ENCODE measurements at regions of chr3 and their contacts with region 1.

Region 1: DNA sequence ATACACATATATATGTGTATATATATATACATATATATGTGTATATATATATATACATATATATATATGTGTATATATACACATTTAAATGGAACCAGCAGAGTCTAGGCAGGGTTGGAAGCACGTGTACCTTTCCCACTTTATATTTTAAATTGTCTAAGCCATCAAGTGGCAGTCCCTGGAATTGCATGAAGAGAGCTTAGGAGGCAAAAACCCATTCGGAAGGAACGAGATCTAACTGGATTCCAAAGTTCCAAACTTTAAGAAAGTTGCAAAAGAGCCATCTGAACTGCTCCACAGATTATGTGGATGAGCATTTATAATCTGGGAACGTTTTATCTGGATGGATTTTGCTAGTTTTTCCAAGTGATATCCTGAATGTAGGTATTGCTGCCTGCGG is 186.5 kb downstream of the FOXP1 start:
- DNase-seq: no peak
- H3K4me3 ChIP-seq: no peak overlapping the region
- H3K4me3 Mint-ChIP-seq: peak overlapping the region in 5 of 8 donors; percentile 20 to 84 (median 76)
- H3K27ac ChIP-seq: peak overlapping the region; percentile 15
- H3K27ac Mint-ChIP-seq: peak overlapping the region in 6 of 7 donors; percentile 73 to 92 (median 80)
- H3K4me1 ChIP-seq: peaks cover 66% of the 10 kb centered on the region
- H3K4me1 Mint-ChIP-seq: peaks cover 56 to 82% (median 69%) of the 10 kb centered on the region in 4 donors
- H3K27me3 ChIP-seq: no peaks in the 10 kb centered on the region
- H3K27me3 Mint-ChIP-seq: no peaks in the 10 kb centered on the region

Region 2: DNA sequence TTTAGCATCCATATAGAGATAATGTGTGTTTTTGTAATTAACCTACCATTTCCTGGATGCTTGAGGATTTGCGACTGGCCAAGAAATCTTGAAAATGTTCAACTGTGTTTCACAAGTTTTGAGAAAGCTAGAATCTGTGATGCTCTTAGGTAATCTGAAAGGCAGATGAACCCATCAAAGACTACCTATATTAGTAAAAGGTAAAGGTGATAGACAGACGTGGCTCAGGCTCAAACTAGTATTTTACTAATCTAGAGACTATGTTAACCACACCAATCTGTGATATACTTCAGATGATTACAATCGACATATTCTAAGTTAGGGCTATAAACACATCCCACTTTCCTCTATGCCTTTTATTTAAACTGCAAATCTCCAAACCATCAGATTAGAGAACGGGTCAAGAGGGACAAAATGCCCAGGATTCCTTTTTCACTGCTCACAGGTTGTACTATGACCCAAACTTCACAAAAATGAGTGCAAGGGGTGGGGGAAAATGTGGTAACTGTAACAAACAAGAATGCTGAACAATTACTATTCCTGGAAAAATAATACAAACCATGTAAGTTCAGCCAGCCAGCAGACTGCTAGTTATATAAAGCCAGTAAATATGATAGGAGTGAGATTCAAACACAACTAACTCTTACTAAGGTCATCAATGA is 108.6 kb before region 1 on chr3:
- CTCF ChIA-PET with region 1: no interaction called
- POLR2A ChIA-PET with region 1: no interaction called
- intact Hi-C with region 1: no loop called
- DNase-seq: no peak
- H3K4me3 ChIP-seq: no peak overlapping the region
- H3K4me3 Mint-ChIP-seq: no peak overlapping the region
- H3K27ac ChIP-seq: no peak overlapping the region
- H3K27ac Mint-ChIP-seq: peak overlapping the region in 4 of 7 donors; percentile 12 to 70 (median 34)
- H3K4me1 ChIP-seq: no peaks in the 10 kb centered on the region
- H3K4me1 Mint-ChIP-seq: peaks cover 16 to 32% (median 19%) of the 10 kb centered on the region in 4 donors
- H3K27me3 ChIP-seq: no peaks in the 10 kb centered on the region
- H3K27me3 Mint-ChIP-seq: no peaks in the 10 kb centered on the region

Region 3: DNA sequence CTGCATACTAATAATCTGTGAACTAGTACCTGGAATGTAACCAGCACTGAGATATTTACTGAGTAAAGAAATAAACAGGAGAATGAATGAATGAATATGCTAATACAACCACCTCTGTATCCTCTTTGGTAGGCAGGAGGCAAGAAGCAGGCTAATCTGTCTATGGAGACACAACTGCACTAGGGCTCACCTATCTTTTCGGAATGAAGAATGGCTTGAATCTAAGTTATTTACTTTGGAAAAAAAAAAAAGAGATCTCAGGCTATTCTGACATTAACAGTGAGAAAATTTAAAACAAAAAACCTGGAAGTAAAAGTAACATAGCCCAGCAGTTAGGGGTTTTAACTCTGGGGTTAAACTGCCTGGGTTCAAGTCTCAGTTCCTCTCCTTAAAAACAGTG is 12.3 kb after region 1 on chr3:
- CTCF ChIA-PET with region 1: interaction called, 14 read pairs
- POLR2A ChIA-PET with region 1: no interaction called
- intact Hi-C with region 1: no loop called
- DNase-seq: no peak
- H3K4me3 ChIP-seq: no peak overlapping the region
- H3K4me3 Mint-ChIP-seq: no peak overlapping the region
- H3K27ac ChIP-seq: no peak overlapping the region
- H3K27ac Mint-ChIP-seq: peak overlapping the region in 5 of 7 donors; percentile 0 to 19 (median 5)
- H3K4me1 ChIP-seq: peaks cover 20% of the 10 kb centered on the region
- H3K4me1 Mint-ChIP-seq: peaks cover 31 to 86% (median 46%) of the 10 kb centered on the region in 4 donors
- H3K27me3 ChIP-seq: no peaks in the 10 kb centered on the region
- H3K27me3 Mint-ChIP-seq: no peaks in the 10 kb centered on the region

Region 4: GRCh38 chr3:71423151-71423906 is 26.3 kb after region 1 on chr3:
- CTCF ChIA-PET with region 1: interaction called, 10 read pairs
- POLR2A ChIA-PET with region 1: interaction called, 4 read pairs
- intact Hi-C with region 1: no loop called
- DNase-seq: no peak
- H3K4me3 ChIP-seq: no peak overlapping the region
- H3K4me3 Mint-ChIP-seq: peak overlapping the region in 5 of 8 donors; percentile 35 to 78 (median 60)
- H3K27ac ChIP-seq: no peak overlapping the region
- H3K27ac Mint-ChIP-seq: peak overlapping the region; percentile 84 to 97 (median 92)
- H3K4me1 ChIP-seq: peaks cover 78% of the 10 kb centered on the region
- H3K4me1 Mint-ChIP-seq: peaks cover 64 to 91% (median 77%) of the 10 kb centered on the region in 4 donors
- H3K27me3 ChIP-seq: no peaks in the 10 kb centered on the region
- H3K27me3 Mint-ChIP-seq: no peaks in the 10 kb centered on the region

Measured in CD4-positive, alpha-beta memory T cell (primary cell).